PC-3 (cell line): ENCODE measurements at regions of chr10 and their contacts with region 1.

Region 1: GRCh38 chr10:48656241-48656913 is 28.3 kb upstream of the WDFY4 start:
- DNase-seq: peak; percentile 97
- ATAC-seq: peak; percentile 81
- H3K4me3 ChIP-seq: peak overlapping the region; percentile 75
- H3K27ac ChIP-seq: no peak overlapping the region
- H3K4me1 ChIP-seq: peaks cover 14% of the 10 kb centered on the region
- H3K27me3 ChIP-seq: no peaks in the 10 kb centered on the region; the same call in 1 of the 2 replicates
- CTCF ChIP-seq: peak; percentile 100

Region 2: DNA sequence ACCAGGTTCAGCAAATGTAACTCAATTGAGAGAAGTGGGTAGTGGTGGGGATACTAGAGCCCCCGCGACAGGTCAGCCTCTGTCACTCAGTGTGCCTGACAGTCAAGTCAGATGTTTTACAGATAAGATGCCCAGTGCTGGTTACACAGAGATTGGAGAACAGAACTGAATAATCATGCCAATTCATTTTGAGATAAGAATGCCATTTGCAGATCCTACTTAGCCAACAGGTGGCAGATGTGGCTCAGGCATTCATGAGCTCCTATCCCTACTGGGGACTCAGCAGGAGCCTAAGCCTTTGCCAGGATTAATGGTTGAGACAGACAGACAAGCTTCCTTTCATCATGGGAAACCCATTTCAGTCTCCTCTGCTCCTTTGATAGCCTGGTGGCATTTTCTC is 212.1 kb before region 1 on chr10:
- CTCF ChIA-PET with region 1: interaction called, 15 read pairs
- POLR2A ChIA-PET with region 1: no interaction called
- intact Hi-C with region 1: no loop called
- DNase-seq: peak; percentile 49
- ATAC-seq: peak; percentile 62
- H3K4me3 ChIP-seq: no peak overlapping the region
- H3K27ac ChIP-seq: no peak overlapping the region
- H3K4me1 ChIP-seq: peaks cover 10% of the 10 kb centered on the region
- H3K27me3 ChIP-seq: no peaks in the 10 kb centered on the region
- CTCF ChIP-seq: peak; percentile 47

Region 3: GRCh38 chr10:48535416-48536155 is 120.8 kb before region 1 on chr10:
- CTCF ChIA-PET with region 1: interaction called, 15 read pairs
- POLR2A ChIA-PET with region 1: no interaction called
- intact Hi-C with region 1: no loop called
- DNase-seq: peak; percentile 34
- ATAC-seq: 0 out of 2 replicates have a peak, but pooled peaks have one; percentile 46
- H3K4me3 ChIP-seq: no peak overlapping the region
- H3K27ac ChIP-seq: no peak overlapping the region
- H3K4me1 ChIP-seq: no peaks in the 10 kb centered on the region
- H3K27me3 ChIP-seq: no peaks in the 10 kb centered on the region
- CTCF ChIP-seq: peak; percentile 55

Region 4: DNA sequence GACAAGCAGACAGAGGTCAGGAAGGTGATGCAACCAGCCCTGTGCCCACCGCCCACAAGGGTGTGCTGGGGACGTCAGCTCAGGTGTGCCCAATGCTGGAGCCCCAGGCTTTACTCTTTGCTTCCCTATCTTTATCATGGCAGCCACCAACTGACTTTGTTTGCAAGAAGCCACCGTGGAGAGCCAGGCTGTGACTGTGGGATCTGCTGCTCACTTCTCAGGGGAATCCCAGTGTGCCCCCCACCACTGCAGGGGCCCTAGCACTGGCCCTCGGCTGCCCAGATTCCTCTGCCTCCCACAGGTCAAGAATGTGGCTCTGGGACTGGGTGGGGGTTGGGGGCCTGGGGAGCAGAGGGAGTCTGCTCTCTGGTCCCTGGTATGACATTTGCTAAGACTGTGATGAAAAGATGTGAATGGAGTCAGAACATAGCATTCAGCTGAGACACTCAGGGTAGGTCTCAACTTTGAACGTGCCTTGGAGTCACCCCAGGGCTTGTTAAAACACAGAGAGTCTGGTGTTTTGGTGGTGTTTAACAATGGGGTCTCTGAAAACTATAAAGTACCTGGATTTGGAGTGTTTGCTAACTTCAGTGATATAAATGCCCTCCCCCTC is 98.8 kb before region 1 on chr10:
- CTCF ChIA-PET with region 1: interaction called, 81 read pairs
- POLR2A ChIA-PET with region 1: no interaction called
- intact Hi-C with region 1: loop called (anchors 1 kb)
- DNase-seq: no peak
- ATAC-seq: no peak
- H3K4me3 ChIP-seq: no peak overlapping the region
- H3K27ac ChIP-seq: no peak overlapping the region
- H3K4me1 ChIP-seq: no peaks in the 10 kb centered on the region
- H3K27me3 ChIP-seq: no peaks in the 10 kb centered on the region
- CTCF ChIP-seq: no peak

Region 5: DNA sequence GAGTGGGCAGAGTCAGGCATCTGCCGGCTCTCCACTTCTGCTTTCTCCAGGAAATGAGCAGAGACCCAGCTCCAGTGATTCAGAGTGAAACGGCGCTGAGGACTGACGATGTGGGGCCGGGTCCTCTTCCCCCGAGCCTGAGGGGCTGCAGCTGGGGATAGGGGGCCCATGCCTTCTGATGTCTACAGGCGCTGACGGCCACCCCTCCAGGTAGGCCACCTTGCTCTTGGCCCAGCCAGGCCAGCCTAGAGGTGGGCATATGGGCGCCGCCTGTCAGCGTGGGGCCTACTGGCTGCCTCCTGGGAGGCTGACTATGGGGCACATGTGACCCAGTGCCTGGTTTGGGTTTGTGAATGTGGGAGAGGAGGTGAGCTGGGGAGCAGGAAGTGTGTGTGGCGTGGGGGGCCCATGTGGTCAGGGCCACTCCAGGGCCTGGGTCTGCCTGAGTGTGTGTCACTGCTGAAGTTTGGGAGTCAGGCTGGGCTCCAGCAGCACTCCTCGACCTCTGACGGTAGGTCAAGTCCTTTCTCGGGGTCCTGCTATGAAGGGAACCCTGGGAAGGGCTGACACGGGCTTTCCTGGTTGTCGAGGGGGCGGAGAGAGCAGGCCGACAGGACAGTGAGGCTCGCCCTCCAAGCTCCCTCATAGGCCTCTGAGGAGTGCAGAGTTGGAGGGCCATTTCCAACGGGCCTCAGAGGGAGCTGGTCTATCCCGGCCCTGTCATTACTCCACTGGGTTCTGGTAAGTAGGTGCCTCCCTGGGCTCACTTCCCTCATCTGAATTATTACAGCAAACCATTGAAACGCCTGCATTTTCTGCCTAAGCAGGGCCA is 28.6 kb after region 1 on chr10 and contains the start of gene WDFY4:
- CTCF ChIA-PET with region 1: interaction called, 10 read pairs
- POLR2A ChIA-PET with region 1: no interaction called
- intact Hi-C with region 1: no loop called
- DNase-seq: no peak
- ATAC-seq: no peak
- H3K4me3 ChIP-seq: no peak within 1 kb of the TSS
- H3K27ac ChIP-seq: no peak within 1 kb of the TSS
- H3K4me1 ChIP-seq: no peaks in the 10 kb centered on the region
- H3K27me3 ChIP-seq: peaks cover 50% of the 10 kb centered on the region
- CTCF ChIP-seq: no peak
- total RNA-seq, gene WDFY4: not detected in 2 replicates

Region 6: DNA sequence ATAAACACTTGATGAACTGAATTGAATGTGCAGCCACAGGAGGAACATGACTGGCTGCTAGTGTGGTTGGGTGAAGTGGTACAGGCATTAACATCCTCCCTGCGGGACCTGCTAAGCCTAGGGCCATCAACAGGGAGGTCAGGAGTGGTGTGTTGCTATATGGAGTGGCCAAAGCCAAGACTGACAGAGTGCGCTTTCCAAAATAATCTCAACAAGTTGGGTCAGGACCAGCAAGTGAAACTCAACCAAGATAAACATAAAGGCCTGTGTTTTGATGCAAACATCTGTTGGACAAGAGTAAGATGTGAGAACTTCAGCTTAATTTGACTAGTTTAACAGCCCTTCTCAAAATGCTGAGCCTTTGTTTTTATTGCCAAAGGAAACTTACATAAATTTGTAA is 126.0 kb after region 1 on chr10:
- CTCF ChIA-PET with region 1: no interaction called
- POLR2A ChIA-PET with region 1: no interaction called
- intact Hi-C with region 1: no loop called
- DNase-seq: no peak
- ATAC-seq: no peak
- H3K4me3 ChIP-seq: no peak overlapping the region
- H3K27ac ChIP-seq: no peak overlapping the region
- H3K4me1 ChIP-seq: no peaks in the 10 kb centered on the region
- H3K27me3 ChIP-seq: peaks cover 36% of the 10 kb centered on the region
- CTCF ChIP-seq: no peak

Region 7: DNA sequence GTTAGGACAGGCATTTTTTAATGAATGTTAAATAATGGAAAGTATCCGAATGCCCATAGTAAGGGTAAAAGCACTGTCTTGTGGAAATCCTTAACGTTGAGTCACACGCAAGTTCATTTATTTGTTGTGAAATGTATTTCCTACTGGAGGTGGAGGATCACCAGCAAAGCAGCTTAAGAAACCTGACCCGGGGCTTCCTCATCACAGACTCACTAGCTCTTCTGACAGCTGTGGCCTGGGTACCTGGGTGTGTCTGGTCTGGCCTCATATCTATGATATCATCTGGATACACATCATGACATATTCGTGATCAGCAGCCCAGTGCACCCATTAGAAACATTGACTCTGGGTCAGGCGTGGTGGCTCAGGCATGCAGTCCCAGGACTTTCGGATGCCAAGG is 730.7 kb after region 1 on chr10:
- CTCF ChIA-PET with region 1: interaction called, 14 read pairs
- POLR2A ChIA-PET with region 1: no interaction called
- intact Hi-C with region 1: no loop called
- DNase-seq: peak; percentile 100
- ATAC-seq: peak; percentile 95
- H3K4me3 ChIP-seq: no peak overlapping the region
- H3K27ac ChIP-seq: peak overlapping the region; percentile 27
- H3K4me1 ChIP-seq: peaks cover 15% of the 10 kb centered on the region
- H3K27me3 ChIP-seq: peaks cover 58% of the 10 kb centered on the region
- CTCF ChIP-seq: no peak

Region 8: GRCh38 chr10:49518982-49519578 is 862.7 kb after region 1 on chr10:
- CTCF ChIA-PET with region 1: no interaction called
- POLR2A ChIA-PET with region 1: no interaction called
- intact Hi-C with region 1: loop called (anchors 1 kb)
- DNase-seq: peak; percentile 91
- ATAC-seq: peak; percentile 84
- H3K4me3 ChIP-seq: no peak overlapping the region
- H3K27ac ChIP-seq: no peak overlapping the region
- H3K4me1 ChIP-seq: no peaks in the 10 kb centered on the region
- H3K27me3 ChIP-seq: no peaks in the 10 kb centered on the region
- CTCF ChIP-seq: peak; percentile 99